HepG2 (cell line): ENCODE measurements at regions of chr21 and their contacts with region 1.

Region 1: GRCh38 chr21:38787461-38788274 is 18.1 kb upstream of the ETS2 start:
- DNase-seq: peak; percentile 99
- ATAC-seq: peak; percentile 98
- H3K4me3 ChIP-seq: peak overlapping the region; percentile 4 to 56 (median 48); a peak in 5 of 6 replicates
- H3K27ac ChIP-seq: peak overlapping the region; percentile 97
- H3K4me1 ChIP-seq: peaks cover 65% of the 10 kb centered on the region
- H3K27me3 ChIP-seq: no peaks in the 10 kb centered on the region
- CTCF ChIP-seq: peak; percentile 46
- EP300 ChIP-seq: peak; percentile 87 to 96
- POLR2A ChIP-seq: peak; percentile 66 to 72
- RAD21 ChIP-seq: no peak; the same call in 1 of the 2 replicates

Region 2: DNA sequence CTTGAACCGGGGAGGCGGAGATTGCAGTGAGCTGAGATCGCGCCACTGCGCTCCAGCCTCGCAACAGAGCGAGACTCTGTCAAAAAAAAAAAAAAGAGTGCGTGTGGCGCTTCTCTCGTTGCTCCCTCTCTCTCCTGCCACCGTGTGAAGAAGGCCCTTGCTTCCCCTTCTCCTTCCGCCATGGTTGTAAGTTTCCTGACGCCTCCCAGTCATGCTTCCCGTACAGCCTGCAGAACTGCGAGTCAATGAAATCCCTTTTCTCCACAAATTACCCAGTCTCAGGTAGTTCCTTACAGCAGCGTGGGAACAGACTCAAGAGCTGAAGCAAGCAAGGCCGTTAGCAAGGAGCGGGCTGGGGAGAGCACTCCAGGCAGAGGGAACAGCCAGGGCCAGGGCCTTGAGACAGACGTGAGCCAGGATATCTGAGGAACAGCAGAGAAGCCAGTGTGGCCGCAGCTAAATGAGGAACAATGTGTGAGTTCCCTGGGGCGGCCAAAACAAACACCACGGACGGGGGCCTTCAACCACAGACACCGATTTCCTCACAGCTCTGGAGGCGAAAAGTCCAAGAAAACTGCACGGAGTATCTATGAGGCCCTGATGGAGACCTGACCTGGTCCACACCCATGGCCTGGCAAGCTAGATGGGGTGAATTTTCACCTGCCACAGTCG is 36.2 kb before region 1 on chr21:
- CTCF ChIA-PET with region 1: no interaction called
- POLR2A ChIA-PET with region 1: interaction called, 13 read pairs
- in situ Hi-C with region 1: no loop called
- intact Hi-C with region 1: no loop called
- DNase-seq: no peak
- ATAC-seq: peak; percentile 53
- H3K4me3 ChIP-seq: peak overlapping the region; percentile 7 to 55 (median 40); a peak in 4 of 6 replicates
- H3K27ac ChIP-seq: no peak overlapping the region
- H3K4me1 ChIP-seq: peaks cover 60% of the 10 kb centered on the region
- H3K27me3 ChIP-seq: no peaks in the 10 kb centered on the region; a peak in 2 of 5 replicates
- CTCF ChIP-seq: no peak
- EP300 ChIP-seq: no peak
- POLR2A ChIP-seq: no peak
- RAD21 ChIP-seq: no peak

Region 3: DNA sequence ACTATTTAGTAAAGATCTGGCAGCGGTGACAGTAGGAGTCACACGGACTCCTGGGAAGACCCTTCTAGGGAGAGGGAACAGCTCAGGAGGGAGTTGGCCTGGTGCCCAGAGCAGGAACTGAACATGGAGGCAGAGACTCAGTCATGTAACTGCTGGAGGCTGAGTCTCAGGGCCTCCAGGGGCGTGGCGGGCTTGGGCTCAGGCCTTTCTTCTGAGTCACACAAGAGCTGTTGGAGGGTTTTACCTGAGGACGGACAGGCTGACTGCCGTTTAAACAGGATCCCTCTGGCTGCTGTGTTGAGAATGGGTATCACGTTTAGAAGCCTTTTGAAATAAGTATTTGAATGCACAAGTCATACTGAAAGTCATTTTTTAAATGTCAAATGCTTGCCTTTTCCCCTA is 10.8 kb after region 1 on chr21:
- CTCF ChIA-PET with region 1: no interaction called
- POLR2A ChIA-PET with region 1: interaction called, 44 read pairs
- in situ Hi-C with region 1: no loop called
- intact Hi-C with region 1: no loop called
- DNase-seq: no peak
- ATAC-seq: no peak
- H3K4me3 ChIP-seq: no peak overlapping the region
- H3K27ac ChIP-seq: peak overlapping the region; percentile 41
- H3K4me1 ChIP-seq: peaks cover 96% of the 10 kb centered on the region
- H3K27me3 ChIP-seq: no peaks in the 10 kb centered on the region
- CTCF ChIP-seq: no peak
- EP300 ChIP-seq: no peak
- POLR2A ChIP-seq: no peak
- RAD21 ChIP-seq: no peak

Region 4: DNA sequence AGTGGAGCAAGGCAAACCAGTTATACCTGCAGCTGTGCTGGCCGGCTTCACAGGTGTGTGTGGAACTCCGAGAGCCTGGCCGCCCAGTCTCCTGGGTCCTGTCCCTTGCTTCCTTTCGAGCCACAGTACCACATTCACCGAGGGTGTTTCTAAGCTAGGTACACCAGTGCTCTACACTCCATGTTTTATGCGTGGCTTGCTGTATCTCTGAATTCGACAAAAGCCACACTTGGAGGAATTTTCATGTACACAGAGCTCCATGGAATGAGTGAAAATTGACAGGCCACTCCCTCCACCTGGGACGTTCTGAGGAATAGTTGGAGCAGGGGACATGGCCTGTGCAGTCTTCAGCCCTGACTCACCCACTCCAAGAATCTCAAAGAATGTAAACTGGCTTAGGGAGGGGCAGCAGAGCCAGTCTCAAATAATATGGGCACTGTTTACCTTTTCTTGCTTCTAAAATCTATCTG is 32.1 kb after region 1 on chr21:
- CTCF ChIA-PET with region 1: no interaction called
- POLR2A ChIA-PET with region 1: interaction called, 15 read pairs
- in situ Hi-C with region 1: no loop called
- intact Hi-C with region 1: loop called (anchors 5 kb)
- DNase-seq: no peak
- ATAC-seq: no peak
- H3K4me3 ChIP-seq: no peak overlapping the region
- H3K27ac ChIP-seq: no peak overlapping the region
- H3K4me1 ChIP-seq: peaks cover 65% of the 10 kb centered on the region
- H3K27me3 ChIP-seq: no peaks in the 10 kb centered on the region
- CTCF ChIP-seq: no peak
- EP300 ChIP-seq: no peak
- POLR2A ChIP-seq: peak in 1 of 2 experiments; percentile 34; a peak in 1 of 4 replicates
- RAD21 ChIP-seq: no peak

Region 5: GRCh38 chr21:38831526-38832467 is 44.1 kb after region 1 on chr21:
- CTCF ChIA-PET with region 1: no interaction called
- POLR2A ChIA-PET with region 1: interaction called, 16 read pairs
- in situ Hi-C with region 1: no loop called
- intact Hi-C with region 1: no loop called
- DNase-seq: peak; percentile 91
- ATAC-seq: peak; percentile 86
- H3K4me3 ChIP-seq: no peak overlapping the region; a peak in 1 of 6 replicates
- H3K27ac ChIP-seq: peak overlapping the region; percentile 31
- H3K4me1 ChIP-seq: peaks cover 51% of the 10 kb centered on the region
- H3K27me3 ChIP-seq: no peaks in the 10 kb centered on the region
- CTCF ChIP-seq: no peak
- EP300 ChIP-seq: peak; percentile 49 to 69; a peak in 2 of 4 replicates
- POLR2A ChIP-seq: no peak
- RAD21 ChIP-seq: no peak

Region 6: DNA sequence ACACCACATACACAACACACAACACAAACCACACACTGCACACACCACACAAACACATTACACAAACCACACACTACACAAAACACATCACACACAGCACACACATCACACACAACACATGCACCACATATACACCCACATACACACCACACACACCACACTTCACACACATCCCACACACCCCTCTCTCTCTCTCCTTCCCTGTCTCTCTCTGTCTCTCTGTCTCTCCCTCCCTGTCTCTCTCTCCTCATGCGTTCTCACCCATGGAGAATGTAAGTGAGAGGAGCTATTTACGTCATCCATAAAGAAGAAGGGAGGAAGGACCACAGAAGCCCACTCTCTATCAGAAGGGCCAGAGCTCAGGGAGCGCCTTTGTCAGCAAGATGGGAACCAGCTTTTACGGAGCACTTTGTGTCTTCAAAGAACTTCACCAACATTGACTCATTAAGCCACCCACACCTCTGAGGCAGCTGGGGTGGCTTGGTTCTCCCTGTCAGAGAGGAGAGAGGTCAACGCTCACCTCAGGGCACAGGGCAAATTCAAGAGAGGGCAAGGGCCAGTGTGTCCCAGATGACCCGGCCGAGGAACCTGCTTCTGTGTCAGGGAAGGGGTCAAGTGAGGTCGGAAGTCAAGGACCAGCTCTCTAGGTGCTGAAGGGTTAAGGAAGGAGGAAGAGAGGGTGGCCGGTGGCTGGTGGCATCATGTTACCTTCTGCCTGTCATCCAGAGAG is 126.8 kb after region 1 on chr21:
- CTCF ChIA-PET with region 1: no interaction called
- POLR2A ChIA-PET with region 1: interaction called, 10 read pairs
- in situ Hi-C with region 1: no loop called
- intact Hi-C with region 1: no loop called
- DNase-seq: no peak
- ATAC-seq: peak; percentile 8; the same call in 2 of the 3 replicates
- H3K4me3 ChIP-seq: peak overlapping the region in 1 of 3 experiments; percentile 11; a peak in 1 of 6 replicates
- H3K27ac ChIP-seq: peak overlapping the region; percentile 48
- H3K4me1 ChIP-seq: peaks cover 85% of the 10 kb centered on the region
- H3K27me3 ChIP-seq: no peaks in the 10 kb centered on the region; a peak in 1 of 5 replicates
- CTCF ChIP-seq: no peak
- EP300 ChIP-seq: peak in 1 of 2 experiments; percentile 34; a peak in 1 of 4 replicates
- POLR2A ChIP-seq: no peak
- RAD21 ChIP-seq: no peak

Region 7: DNA sequence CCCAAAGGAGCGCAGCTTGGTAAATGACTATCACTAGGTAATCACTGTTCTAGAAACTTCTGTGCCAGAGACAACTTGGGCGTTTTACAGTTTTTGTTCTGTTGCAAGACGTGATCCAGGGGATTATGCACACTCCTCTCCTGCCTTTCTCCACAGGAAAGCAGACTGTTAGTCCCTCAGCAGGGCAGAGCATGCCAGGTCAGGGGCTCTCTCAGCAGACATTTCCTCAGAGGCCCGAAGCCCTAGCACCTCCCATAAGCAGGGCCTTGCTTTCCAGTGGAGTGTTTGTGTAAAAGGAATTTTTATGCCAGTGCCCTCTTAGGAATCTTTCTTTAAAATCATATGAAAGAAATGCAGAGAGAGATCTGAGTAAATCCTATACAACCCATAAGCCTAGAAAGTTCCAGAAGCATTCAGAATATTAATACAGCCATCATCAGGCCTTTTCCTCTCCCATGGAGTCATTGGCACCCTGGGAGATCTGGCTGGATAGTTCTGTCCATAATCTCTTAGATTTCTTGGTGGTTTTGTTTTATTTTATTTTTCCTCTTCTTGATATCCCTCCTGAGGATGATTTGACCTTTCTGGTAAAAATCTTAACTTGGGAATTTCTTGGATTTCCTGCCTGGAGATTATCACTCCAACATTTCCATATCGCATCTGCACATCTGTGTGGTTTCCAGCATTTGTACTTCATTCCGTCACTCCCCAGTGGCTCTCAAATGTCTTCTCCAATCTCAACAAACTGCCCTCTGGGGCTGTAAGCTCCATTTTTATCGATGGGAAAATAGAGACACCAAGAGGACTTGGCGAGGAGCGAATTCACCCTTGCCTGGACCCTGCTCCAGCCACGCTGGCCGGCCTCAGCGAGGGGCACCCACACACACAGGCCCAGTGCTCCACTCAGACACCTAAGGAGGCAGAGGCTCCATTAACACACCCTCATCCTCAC is 279.4 kb after region 1 on chr21:
- CTCF ChIA-PET with region 1: no interaction called
- POLR2A ChIA-PET with region 1: no interaction called
- in situ Hi-C with region 1: no loop called
- intact Hi-C with region 1: no loop called
- DNase-seq: no peak
- ATAC-seq: no peak
- H3K4me3 ChIP-seq: no peak overlapping the region
- H3K27ac ChIP-seq: no peak overlapping the region
- H3K4me1 ChIP-seq: peaks cover 29% of the 10 kb centered on the region
- H3K27me3 ChIP-seq: no peaks in the 10 kb centered on the region
- CTCF ChIP-seq: no peak
- EP300 ChIP-seq: no peak
- POLR2A ChIP-seq: no peak
- RAD21 ChIP-seq: no peak